Panc1 (cell line): ENCODE measurements at regions of chr19 and their contacts with region 1.

Region 1: GRCh38 chr19:11203194-11204075 is 6.1 kb upstream of the KANK2 start:
- DNase-seq: no peak
- ATAC-seq: peak; percentile 76
- H3K4me3 ChIP-seq: no peak overlapping the region
- H3K27ac ChIP-seq: peak overlapping the region; percentile 66
- H3K4me1 ChIP-seq: peaks cover 13% of the 10 kb centered on the region
- H3K27me3 ChIP-seq: no peaks in the 10 kb centered on the region
- CTCF ChIP-seq: peak; percentile 85

Region 2: GRCh38 chr19:11078893-11079292 is 124.5 kb before region 1 on chr19:
- CTCF ChIA-PET with region 1: interaction called, 10 read pairs
- POLR2A ChIA-PET with region 1: no interaction called
- in situ Hi-C with region 1: no loop called
- intact Hi-C with region 1: no loop called
- DNase-seq: no peak
- ATAC-seq: no peak
- H3K4me3 ChIP-seq: no peak overlapping the region
- H3K27ac ChIP-seq: no peak overlapping the region
- H3K4me1 ChIP-seq: peaks cover 1% of the 10 kb centered on the region; the same call in 1 of the 2 replicates
- H3K27me3 ChIP-seq: no peaks in the 10 kb centered on the region
- CTCF ChIP-seq: no peak

Region 3: DNA sequence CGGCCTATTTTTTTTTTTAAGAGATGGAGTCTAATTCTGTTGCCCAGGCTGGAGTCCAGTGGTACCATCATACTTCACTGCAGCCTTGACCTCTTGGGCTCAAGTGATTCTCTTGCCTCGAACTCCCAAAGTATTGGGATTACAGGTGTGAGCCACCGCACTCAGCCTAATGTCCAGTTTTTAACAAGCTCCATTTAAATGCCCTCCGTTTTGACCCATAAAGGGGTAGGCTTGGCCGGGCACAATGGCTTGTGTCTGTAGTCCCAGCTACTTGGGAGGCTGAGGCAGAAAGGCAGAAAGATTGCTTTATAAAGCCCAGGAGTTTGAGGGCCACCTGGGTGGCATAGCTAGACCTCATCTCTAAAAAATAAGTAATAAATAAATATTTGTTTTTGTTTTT is 102.4 kb before region 1 on chr19:
- CTCF ChIA-PET with region 1: no interaction called
- POLR2A ChIA-PET with region 1: interaction called, 15 read pairs
- in situ Hi-C with region 1: no loop called
- intact Hi-C with region 1: no loop called
- DNase-seq: no peak
- ATAC-seq: no peak
- H3K4me3 ChIP-seq: no peak overlapping the region
- H3K27ac ChIP-seq: no peak overlapping the region
- H3K4me1 ChIP-seq: peaks cover under 1% of the 10 kb centered on the region; the same call in 1 of the 2 replicates
- H3K27me3 ChIP-seq: no peaks in the 10 kb centered on the region
- CTCF ChIP-seq: no peak

Region 4: GRCh38 chr19:11137542-11138384 is 65.7 kb before region 1 on chr19:
- CTCF ChIA-PET with region 1: interaction called, 4 read pairs
- POLR2A ChIA-PET with region 1: no interaction called
- in situ Hi-C with region 1: no loop called
- intact Hi-C with region 1: loop called (anchors 5 kb)
- DNase-seq: no peak
- ATAC-seq: peak; percentile 44
- H3K4me3 ChIP-seq: peak overlapping the region; percentile 10 to 14
- H3K27ac ChIP-seq: peak overlapping the region; percentile 94
- H3K4me1 ChIP-seq: peaks cover 30% of the 10 kb centered on the region
- H3K27me3 ChIP-seq: no peaks in the 10 kb centered on the region
- CTCF ChIP-seq: peak; percentile 82